ENCODE measurements at regions of chr14 and their contacts with region 1.

Region 1: GRCh38 chr14:29843981-29844380 is 83.7 kb downstream of the PRKD1 start:
- DNase-seq: no peak
- H3K4me3 ChIP-seq: no peak overlapping the region
- CTCF ChIP-seq: no peak
- POLR2A ChIP-seq: no peak

Region 2: DNA sequence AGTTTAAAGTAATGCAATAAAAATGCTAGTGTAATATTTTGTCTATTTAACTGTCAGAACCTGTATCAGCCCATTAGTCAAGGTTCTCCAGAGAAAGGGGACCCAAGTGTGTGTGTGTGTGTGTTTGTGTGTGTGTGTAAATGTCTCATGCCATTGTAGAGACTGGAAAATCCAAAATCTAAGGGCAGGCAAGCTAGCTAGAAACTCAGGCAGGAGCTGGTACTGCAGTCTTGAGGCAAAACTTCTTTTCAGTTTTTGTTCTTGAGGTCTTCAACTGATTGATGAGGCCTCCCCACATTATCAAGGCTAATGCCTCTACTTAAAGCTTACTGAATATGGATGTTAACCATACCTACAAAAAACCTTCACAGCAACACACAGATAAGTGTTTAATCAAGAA is 43.0 kb before region 1 on chr14:
- intact Hi-C with region 1: loop called (anchors 1 kb)
- DNase-seq: no peak
- H3K4me3 ChIP-seq: no peak overlapping the region
- CTCF ChIP-seq: no peak
- POLR2A ChIP-seq: no peak

Measured in lower leg skin (tissue), 4 donors.